ENCODE measurements at regions of chr11 and their contacts with region 1.

Region 1: GRCh38 chr11:112289588-112290492 is 29.2 kb upstream of the PLET1 start:
- DNase-seq: peak; percentile 69 to 87 (median 80)
- H3K4me3 ChIP-seq: peak overlapping the region; percentile 33
- H3K27ac ChIP-seq: no peak overlapping the region
- H3K4me1 ChIP-seq: peaks cover 2% of the 10 kb centered on the region
- H3K27me3 ChIP-seq: no peaks in the 10 kb centered on the region
- CTCF ChIP-seq: peak; percentile 87 to 90 (median 87)
- EP300 ChIP-seq: no peak
- POLR2A ChIP-seq: no peak

Region 2: DNA sequence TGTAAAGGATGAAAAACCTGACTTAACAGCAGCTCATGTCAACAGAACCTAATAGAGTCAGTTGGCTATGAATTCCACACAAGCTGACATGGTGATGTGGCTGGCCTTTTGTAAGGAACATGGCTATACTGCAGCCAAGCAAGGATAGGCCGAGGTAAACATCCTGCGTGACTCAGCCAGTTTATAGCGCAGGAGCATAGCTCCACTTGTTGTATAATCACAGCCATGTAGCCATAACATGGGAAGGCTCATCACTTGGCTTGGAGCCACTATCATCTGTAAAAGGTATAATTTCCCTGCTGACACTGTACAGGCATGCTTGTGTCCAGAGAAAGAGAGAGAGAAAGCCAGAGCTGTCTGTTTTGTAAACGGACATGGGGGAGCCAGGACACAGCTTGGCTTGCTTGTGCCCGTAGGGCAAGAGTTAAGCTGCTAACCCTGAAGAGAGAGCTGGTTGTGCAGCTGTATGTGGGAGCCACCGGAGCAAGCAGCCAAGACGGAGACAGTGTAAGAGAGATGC is 75.2 kb after region 1 on chr11:
- intact Hi-C with region 1: loop called in 1 of 4 experiments (anchors 2 kb)
- DNase-seq: peak; percentile 41 to 77 (median 60)
- H3K4me3 ChIP-seq: no peak overlapping the region
- H3K27ac ChIP-seq: peak overlapping the region; percentile 40 to 82
- H3K4me1 ChIP-seq: peaks cover 4% of the 10 kb centered on the region
- H3K27me3 ChIP-seq: no peaks in the 10 kb centered on the region
- CTCF ChIP-seq: no peak
- EP300 ChIP-seq: no peak
- POLR2A ChIP-seq: no peak

Measured in ovary (tissue), 10 donors.